ENCODE measurements at regions of chr20 and their contacts with region 1.

Region 1: DNA sequence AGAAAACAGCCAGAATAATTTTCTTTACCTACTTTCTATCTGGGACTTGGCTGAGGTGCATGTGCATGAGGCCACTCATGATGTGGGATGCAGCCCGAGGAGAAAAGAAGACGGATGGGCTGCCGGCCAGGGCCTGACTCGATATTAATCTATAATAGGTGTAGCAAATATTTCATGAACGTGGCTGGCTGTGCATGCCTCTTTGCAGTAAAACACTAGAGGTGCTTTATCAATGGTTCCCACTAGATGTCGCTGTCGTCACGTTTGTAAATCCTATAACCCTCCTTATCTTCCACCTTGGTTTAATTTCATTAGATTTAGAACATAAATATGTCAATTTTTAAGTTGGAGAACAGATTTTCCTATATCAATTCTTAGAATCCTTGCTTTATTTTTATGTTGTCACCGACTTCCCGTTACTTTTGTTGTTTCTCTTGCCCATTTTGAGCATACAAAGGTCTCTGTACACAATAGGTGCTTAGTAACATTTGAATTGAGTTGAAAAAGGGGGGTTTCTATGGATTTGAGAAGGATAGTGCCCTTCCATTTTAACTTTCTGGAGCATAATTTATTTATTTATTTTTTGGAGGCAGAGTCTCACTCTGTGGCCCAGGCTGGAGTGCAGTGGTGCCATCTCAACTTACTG is 19.6 kb upstream of the FERMT1 start:
- DNase-seq: peak; percentile 67
- H3K4me3 Mint-ChIP-seq: no peak overlapping the region
- H3K27ac Mint-ChIP-seq: no peak overlapping the region
- H3K4me1 Mint-ChIP-seq: no peaks in the 10 kb centered on the region
- H3K27me3 Mint-ChIP-seq: peaks cover 10% of the 10 kb centered on the region

Region 2: GRCh38 chr20:6583134-6583738 is 440.8 kb after region 1 on chr20:
- CTCF ChIA-PET with region 1: no interaction called
- intact Hi-C with region 1: loop called (anchors 10 kb)
- DNase-seq: no peak
- H3K4me3 Mint-ChIP-seq: no peak overlapping the region
- H3K27ac Mint-ChIP-seq: no peak overlapping the region
- H3K4me1 Mint-ChIP-seq: no peaks in the 10 kb centered on the region
- H3K27me3 Mint-ChIP-seq: no peaks in the 10 kb centered on the region

Region 3: GRCh38 chr20:7094438-7094997 is 952.0 kb after region 1 on chr20:
- CTCF ChIA-PET with region 1: no interaction called
- intact Hi-C with region 1: loop called (anchors 5 kb)
- DNase-seq: peak; percentile 8
- H3K4me3 Mint-ChIP-seq: no peak overlapping the region
- H3K27ac Mint-ChIP-seq: no peak overlapping the region
- H3K4me1 Mint-ChIP-seq: no peaks in the 10 kb centered on the region
- H3K27me3 Mint-ChIP-seq: no peaks in the 10 kb centered on the region

Region 4: DNA sequence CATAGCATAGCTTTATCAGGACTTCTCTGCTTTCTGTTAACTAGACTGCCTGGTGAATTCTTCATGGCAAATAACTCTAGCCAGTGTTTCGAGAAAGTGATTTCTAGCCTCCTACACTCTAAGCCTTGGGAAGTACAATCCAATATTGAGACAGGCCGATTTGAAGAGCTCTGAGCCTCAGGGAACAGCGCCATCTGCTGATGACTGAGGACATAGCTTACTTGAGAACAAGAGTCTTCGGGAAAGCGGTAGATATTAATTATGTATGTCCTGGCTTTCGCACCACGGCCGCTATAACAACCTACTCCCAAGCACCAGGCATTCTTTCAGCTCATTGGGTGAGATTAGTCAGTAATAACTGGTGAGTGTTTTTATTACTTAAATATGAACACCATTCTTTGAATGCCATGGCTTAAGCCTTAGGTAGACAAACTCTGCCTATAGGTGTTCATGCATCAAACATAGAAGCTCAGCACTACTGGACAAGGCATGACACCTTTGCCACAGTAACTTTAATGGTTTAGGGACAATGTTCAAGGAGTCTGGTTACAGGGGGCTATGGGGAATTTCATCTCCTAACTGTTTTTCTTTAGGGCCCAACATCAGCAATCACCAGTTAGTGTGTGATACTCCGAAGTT is 1143.6 kb after region 1 on chr20:
- CTCF ChIA-PET with region 1: no interaction called
- intact Hi-C with region 1: loop called (anchors 5 kb)
- DNase-seq: peak; percentile 55
- H3K4me3 Mint-ChIP-seq: no peak overlapping the region
- H3K27ac Mint-ChIP-seq: no peak overlapping the region
- H3K4me1 Mint-ChIP-seq: no peaks in the 10 kb centered on the region
- H3K27me3 Mint-ChIP-seq: no peaks in the 10 kb centered on the region

Region 5: GRCh38 chr20:7375905-7376304 is 1233.4 kb after region 1 on chr20:
- CTCF ChIA-PET with region 1: no interaction called
- intact Hi-C with region 1: loop called (anchors 5 kb)
- DNase-seq: no peak
- H3K4me3 Mint-ChIP-seq: no peak overlapping the region
- H3K27ac Mint-ChIP-seq: no peak overlapping the region
- H3K4me1 Mint-ChIP-seq: no peaks in the 10 kb centered on the region
- H3K27me3 Mint-ChIP-seq: no peaks in the 10 kb centered on the region

Measured in activated naive CD4-positive, alpha-beta T cell treated with anti-CD3 and anti-CD28 coated beads for 36 hours (primary cell).